CD8-positive, alpha-beta memory T cell (primary cell): ENCODE measurements at regions of chr5 and their contacts with region 1.

Region 1: GRCh38 chr5:150217873-150218692 is 28.2 kb downstream of the SLC6A7 start:
- DNase-seq: peak; percentile 69 to 84 (median 73)
- H3K4me3 ChIP-seq: no peak overlapping the region
- H3K4me3 Mint-ChIP-seq: no peak overlapping the region
- H3K27ac ChIP-seq: no peak overlapping the region
- H3K27ac Mint-ChIP-seq: peak overlapping the region in 1 of 8 donors; percentile 36
- H3K4me1 ChIP-seq: no peaks in the 10 kb centered on the region
- H3K4me1 Mint-ChIP-seq: peaks cover 0 to 5% (median 0%) of the 10 kb centered on the region in 3 donors
- H3K27me3 ChIP-seq: no peaks in the 10 kb centered on the region
- H3K27me3 Mint-ChIP-seq: peaks cover 2 to 19% of the 10 kb centered on the region in 2 donors

Region 2: DNA sequence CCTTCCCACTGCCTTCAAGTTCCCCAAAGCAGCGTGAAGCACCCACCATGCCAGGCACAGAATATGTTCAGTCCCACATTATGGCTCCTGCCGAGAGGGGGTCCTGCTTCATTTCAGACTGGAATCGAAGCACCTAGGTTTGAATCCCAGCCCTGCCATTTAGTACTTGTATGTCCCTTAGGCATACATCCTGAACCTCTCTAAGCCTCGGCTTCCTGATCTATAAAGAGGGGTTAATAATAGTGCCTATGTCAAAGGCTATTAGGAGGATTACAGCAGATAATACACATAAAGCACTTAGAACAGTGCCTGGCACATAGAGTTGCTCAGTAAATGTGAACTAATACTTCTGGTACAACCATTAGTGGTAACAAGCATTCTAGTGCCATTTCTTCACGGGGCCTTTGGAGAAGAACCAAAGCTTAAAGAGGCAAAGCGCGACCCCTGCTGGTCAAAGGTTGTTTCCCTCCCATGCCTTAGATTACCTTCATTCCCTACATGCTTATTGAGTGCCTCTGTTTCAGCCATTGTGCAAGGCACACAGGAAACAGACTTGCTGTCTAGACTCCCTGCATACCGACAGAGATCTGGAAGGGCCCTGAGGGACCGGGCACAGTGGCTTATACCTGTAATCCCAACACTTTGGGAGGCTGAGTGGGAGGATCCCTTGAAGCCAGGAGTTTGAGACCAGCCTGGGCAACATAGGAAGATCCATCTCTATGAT is 389.8 kb before region 1 on chr5:
- CTCF ChIA-PET with region 1: no interaction called
- POLR2A ChIA-PET with region 1: no interaction called
- DNase-seq: peak; percentile 50 to 81 (median 69)
- H3K4me3 ChIP-seq: no peak overlapping the region
- H3K4me3 Mint-ChIP-seq: no peak overlapping the region
- H3K27ac ChIP-seq: no peak overlapping the region
- H3K27ac Mint-ChIP-seq: peak overlapping the region in 2 of 8 donors; percentile 1 to 57
- H3K4me1 ChIP-seq: no peaks in the 10 kb centered on the region
- H3K4me1 Mint-ChIP-seq: peaks cover 1 to 5% (median 2%) of the 10 kb centered on the region in 3 donors
- H3K27me3 ChIP-seq: no peaks in the 10 kb centered on the region
- H3K27me3 Mint-ChIP-seq: no peaks in the 10 kb centered on the region

Region 3: GRCh38 chr5:150161242-150162141 is 56.6 kb before region 1 on chr5:
- CTCF ChIA-PET with region 1: interaction called, 13 read pairs
- POLR2A ChIA-PET with region 1: no interaction called
- DNase-seq: peak; percentile 42 to 79 (median 61)
- H3K4me3 ChIP-seq: no peak overlapping the region
- H3K4me3 Mint-ChIP-seq: no peak overlapping the region
- H3K27ac ChIP-seq: no peak overlapping the region
- H3K27ac Mint-ChIP-seq: peak overlapping the region in 1 of 8 donors; percentile 29
- H3K4me1 ChIP-seq: no peaks in the 10 kb centered on the region
- H3K4me1 Mint-ChIP-seq: peaks cover 0 to under 1% (median 0%) of the 10 kb centered on the region in 3 donors
- H3K27me3 ChIP-seq: no peaks in the 10 kb centered on the region
- H3K27me3 Mint-ChIP-seq: peaks cover 23 to 24% of the 10 kb centered on the region in 2 donors

Region 4: GRCh38 chr5:150339165-150339564 is 121.1 kb after region 1 on chr5:
- CTCF ChIA-PET with region 1: no interaction called
- POLR2A ChIA-PET with region 1: no interaction called
- DNase-seq: no peak
- H3K4me3 ChIP-seq: no peak overlapping the region
- H3K4me3 Mint-ChIP-seq: no peak overlapping the region
- H3K27ac ChIP-seq: no peak overlapping the region
- H3K27ac Mint-ChIP-seq: no peak overlapping the region
- H3K4me1 ChIP-seq: no peaks in the 10 kb centered on the region
- H3K4me1 Mint-ChIP-seq: peaks cover 9 to 15% (median 14%) of the 10 kb centered on the region in 3 donors
- H3K27me3 ChIP-seq: no peaks in the 10 kb centered on the region
- H3K27me3 Mint-ChIP-seq: peaks cover 0 to 6% of the 10 kb centered on the region in 2 donors

Region 5: GRCh38 chr5:151097786-151098498 is 879.9 kb after region 1 on chr5:
- CTCF ChIA-PET with region 1: no interaction called
- POLR2A ChIA-PET with region 1: no interaction called
- DNase-seq: peak in 4 of 5 donors; percentile 18 to 64 (median 42)
- H3K4me3 ChIP-seq: no peak overlapping the region
- H3K4me3 Mint-ChIP-seq: peak overlapping the region; percentile 7 to 87 (median 74)
- H3K27ac ChIP-seq: peak overlapping the region; percentile 14
- H3K27ac Mint-ChIP-seq: peak overlapping the region; percentile 81 to 97 (median 92)
- H3K4me1 ChIP-seq: peaks cover 61% of the 10 kb centered on the region
- H3K4me1 Mint-ChIP-seq: peaks cover 65 to 84% (median 77%) of the 10 kb centered on the region in 3 donors
- H3K27me3 ChIP-seq: no peaks in the 10 kb centered on the region
- H3K27me3 Mint-ChIP-seq: peaks cover 0 to 4% of the 10 kb centered on the region in 2 donors